Adrenal gland (tissue), 19 donors: ENCODE measurements at regions of chr2 and their contacts with region 1.

Region 1: DNA sequence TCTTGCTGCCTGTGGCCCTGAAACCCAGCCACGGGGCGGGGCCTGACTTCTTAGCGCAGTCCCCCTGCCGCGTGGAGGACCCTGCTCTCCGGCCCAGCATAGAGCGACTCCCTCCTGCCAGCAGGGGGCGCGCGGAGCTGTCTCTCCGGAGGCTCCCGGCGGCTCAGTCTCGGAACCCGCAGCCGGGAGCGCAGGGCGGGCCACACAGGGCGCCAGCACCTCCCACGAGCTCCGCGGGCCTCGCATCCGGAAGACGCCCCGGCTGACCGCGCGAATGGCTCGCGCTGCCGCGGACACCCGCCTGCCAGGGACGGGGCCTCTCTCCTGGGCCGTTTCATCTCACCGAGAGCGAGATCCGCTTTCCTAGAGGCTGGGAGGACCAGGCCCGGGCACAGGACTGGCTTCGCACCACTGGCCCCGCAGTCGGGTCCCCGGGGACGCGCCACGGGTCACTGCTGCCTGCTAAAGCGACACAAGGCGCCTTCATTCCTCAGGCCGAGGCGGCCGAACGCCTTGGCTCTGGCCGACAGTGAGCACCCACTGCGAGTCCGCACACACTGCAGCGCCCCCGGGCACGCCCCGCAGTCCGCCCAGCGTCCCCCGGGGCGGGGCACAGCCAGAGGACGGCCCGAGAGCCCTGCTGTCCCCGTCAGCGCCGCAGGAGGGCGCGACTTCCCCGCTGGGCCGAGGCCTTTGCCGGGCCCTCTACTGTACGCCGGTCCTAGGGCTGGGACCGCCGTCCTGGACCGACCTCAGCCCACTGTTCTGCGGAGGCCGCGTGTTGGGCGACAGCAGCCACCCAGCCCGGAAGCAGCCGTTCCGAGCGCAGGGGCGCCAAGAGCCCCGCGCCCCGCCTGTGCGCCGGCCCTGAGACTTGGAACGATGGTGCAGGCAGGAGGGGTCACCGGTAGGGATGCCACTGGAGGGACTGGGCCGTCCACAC is 39.0 kb upstream of the ARHGEF4 start:
- DNase-seq: peak; percentile 82 to 92 (median 90)
- H3K4me3 ChIP-seq: peak overlapping the region in 3 of 4 donors; percentile 49 to 80 (median 73)
- H3K27ac ChIP-seq: peak overlapping the region in 4 of 5 donors; percentile 62 to 91 (median 82)
- H3K4me1 ChIP-seq: peaks cover 0 to 11% of the 10 kb centered on the region in 2 donors
- H3K27me3 ChIP-seq: no peaks in the 10 kb centered on the region
- CTCF ChIP-seq: peak; percentile 56 to 93 (median 82)
- POLR2A ChIP-seq: peak; percentile 30 to 40

Region 2: DNA sequence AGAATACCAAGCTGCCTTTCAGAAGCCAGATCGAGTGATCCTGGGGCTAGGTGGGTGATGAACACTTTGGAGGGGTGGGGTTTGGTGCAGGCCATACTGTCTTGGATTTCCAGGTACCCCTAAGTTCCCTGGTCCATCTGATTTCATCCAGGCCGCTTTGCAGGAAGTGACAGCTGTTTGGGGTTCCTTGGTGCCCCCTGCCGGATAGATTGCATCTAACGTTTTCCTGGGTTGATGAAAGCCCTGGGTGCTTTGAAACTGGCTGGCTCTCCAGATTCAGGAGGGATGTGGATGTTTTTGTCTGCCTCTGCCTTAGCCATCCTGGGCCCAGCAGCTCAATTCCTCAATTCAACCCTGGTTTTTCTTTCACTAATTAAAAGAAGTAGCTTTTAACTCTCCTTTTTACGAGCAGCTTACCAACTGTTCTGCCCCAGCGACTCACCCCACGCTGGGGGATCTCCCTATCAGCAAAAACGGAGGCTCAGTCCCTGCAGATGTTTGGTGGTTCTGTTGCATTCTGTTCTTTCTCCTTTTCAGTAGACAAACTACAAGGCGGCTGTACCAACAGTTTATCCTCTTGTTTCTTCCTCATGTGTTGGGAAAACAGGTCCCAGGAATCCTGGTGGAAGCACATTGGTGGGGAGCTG is 76.1 kb after region 1 on chr2:
- intact Hi-C with region 1: loop called (anchors 2 to 5 kb)
- DNase-seq: peak; percentile 65 to 90 (median 78)
- H3K4me3 ChIP-seq: no peak overlapping the region
- H3K27ac ChIP-seq: no peak overlapping the region
- H3K4me1 ChIP-seq: no peaks in the 10 kb centered on the region
- H3K27me3 ChIP-seq: no peaks in the 10 kb centered on the region
- CTCF ChIP-seq: peak; percentile 45 to 73 (median 57)
- POLR2A ChIP-seq: no peak

Region 3: DNA sequence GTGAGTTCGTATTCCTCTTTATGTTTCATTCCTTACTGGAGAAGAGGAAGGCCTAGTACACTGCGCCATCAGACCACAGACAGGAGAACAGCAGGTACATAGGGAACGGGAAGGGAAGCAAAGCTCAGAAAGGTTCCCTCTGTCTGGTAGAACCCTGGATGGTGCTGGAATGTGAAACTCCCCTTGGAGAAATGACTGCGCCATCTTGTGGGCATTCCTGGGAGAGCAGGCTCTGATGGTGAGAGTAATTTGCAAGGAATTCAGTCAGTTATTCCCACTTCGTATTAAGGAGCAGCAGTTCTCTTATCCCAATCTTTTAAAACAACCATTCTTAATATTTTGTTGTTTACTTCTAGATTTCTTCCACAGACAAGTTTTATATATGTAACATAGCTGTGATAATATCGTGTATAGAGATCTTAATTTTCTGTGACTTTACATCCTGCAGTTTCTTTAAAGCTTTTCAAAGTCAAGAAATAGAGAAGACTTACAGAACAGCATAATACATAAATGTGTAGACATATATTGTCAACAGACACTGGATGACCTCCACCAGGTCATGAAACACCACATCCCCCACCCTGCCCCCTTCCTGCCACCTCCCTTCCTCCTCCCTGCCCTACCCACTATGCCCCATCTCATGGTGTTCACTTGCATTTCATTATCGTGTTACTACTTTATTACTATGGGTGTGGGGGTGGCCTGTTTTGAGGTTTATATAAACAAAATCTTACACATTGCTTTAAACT is 122.8 kb after region 1 on chr2:
- intact Hi-C with region 1: loop called in 1 of 2 experiments (anchors 5 kb)
- DNase-seq: peak; percentile 49 to 84 (median 74)
- H3K4me3 ChIP-seq: no peak overlapping the region
- H3K27ac ChIP-seq: no peak overlapping the region
- H3K4me1 ChIP-seq: no peaks in the 10 kb centered on the region
- H3K27me3 ChIP-seq: peaks cover 10% of the 10 kb centered on the region
- CTCF ChIP-seq: peak; percentile 68 to 86 (median 73)
- POLR2A ChIP-seq: no peak